AG04449 (cell line): ENCODE measurements at regions of chr17 and their contacts with region 1.

Region 1: GRCh38 chr17:63006037-63006436 is 40.0 kb downstream of the TANC2 start:
- DNase-seq: no peak
- H3K4me3 ChIP-seq: no peak overlapping the region
- CTCF ChIP-seq: no peak

Region 2: DNA sequence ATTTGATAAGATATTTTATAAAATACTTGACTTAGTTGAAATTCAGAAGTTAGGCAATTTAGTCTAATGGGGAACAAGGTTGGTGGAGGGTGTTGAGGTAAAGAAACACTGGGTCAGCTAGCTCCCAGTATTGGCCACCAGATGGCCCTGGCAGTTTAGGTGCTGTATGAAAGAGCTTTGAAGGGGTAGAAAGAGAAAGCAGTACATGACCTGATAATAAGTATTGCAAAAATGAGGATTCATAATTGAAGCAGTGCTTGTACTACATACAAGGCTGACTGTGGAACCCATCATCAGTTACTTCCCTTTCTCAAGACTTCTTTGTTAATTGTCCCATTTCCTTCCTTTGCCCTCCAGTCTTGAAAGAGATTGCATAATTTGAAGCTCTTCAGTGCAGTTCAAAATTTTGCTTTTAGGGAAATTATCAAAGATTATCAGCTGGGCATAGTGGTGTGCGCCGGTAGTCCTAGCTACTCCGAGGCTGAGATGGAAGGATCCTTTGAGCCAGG is 10.6 kb before region 1 on chr17:
- CTCF ChIA-PET with region 1: interaction called, 13 read pairs
- POLR2A ChIA-PET with region 1: no interaction called
- DNase-seq: no peak
- H3K4me3 ChIP-seq: no peak overlapping the region
- CTCF ChIP-seq: peak; percentile 56

Region 3: GRCh38 chr17:63052639-63053038 is 46.6 kb after region 1 on chr17:
- CTCF ChIA-PET with region 1: no interaction called
- POLR2A ChIA-PET with region 1: no interaction called
- DNase-seq: no peak
- H3K4me3 ChIP-seq: no peak overlapping the region
- CTCF ChIP-seq: no peak